BJ (cell line): ENCODE measurements at regions of chrX and their contacts with region 1.

Region 1: DNA sequence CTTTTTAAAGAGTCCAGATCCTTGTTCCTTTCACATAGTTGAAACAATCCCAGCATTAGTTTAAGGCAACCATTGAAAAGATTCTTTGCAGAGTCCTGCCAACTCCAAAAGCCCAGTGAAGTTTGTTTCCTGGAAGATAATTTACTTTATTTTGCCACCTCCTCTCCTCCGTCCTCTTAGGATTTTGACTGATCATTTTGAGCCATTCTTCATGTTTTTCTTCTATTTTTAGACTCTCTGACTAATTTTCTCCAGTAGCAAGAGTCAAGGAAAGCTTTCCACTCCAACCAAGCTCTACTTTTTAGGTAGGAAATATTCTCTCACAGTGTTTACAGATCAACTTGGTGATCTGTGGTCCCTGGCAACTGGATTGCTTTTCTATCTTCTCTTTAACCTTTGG is 10.3 kb downstream of the NCBP2L start:
- DNase-seq: no peak
- H3K4me3 ChIP-seq: no peak overlapping the region
- H3K27me3 ChIP-seq: no peaks in the 10 kb centered on the region
- CTCF ChIP-seq: no peak

Region 2: GRCh38 chrX:107579956-107580355 is 207.9 kb before region 1 on chrX:
- CTCF ChIA-PET with region 1: no interaction called
- POLR2A ChIA-PET with region 1: interaction called, 16 read pairs
- DNase-seq: no peak
- H3K4me3 ChIP-seq: no peak overlapping the region
- H3K27me3 ChIP-seq: no peaks in the 10 kb centered on the region
- CTCF ChIP-seq: no peak